OCI-LY7 (cell line): ENCODE measurements at regions of chr1 and their contacts with region 1.

Region 1: GRCh38 chr1:37274938-37275631 is 199.3 kb upstream of the ZC3H12A start:
- DNase-seq: no peak
- H3K4me3 ChIP-seq: no peak overlapping the region
- H3K27ac ChIP-seq: no peak overlapping the region
- H3K4me1 ChIP-seq: no peaks in the 10 kb centered on the region
- CTCF ChIP-seq: no peak

Region 2: GRCh38 chr1:37158113-37158749 is 116.9 kb before region 1 on chr1:
- CTCF ChIA-PET with region 1: interaction called, 15 read pairs
- POLR2A ChIA-PET with region 1: no interaction called
- intact Hi-C with region 1: no loop called
- DNase-seq: no peak
- H3K4me3 ChIP-seq: no peak overlapping the region
- H3K27ac ChIP-seq: no peak overlapping the region
- H3K4me1 ChIP-seq: no peaks in the 10 kb centered on the region
- CTCF ChIP-seq: no peak